ENCODE measurements at regions of chr2 and their contacts with region 1.

Region 1: DNA sequence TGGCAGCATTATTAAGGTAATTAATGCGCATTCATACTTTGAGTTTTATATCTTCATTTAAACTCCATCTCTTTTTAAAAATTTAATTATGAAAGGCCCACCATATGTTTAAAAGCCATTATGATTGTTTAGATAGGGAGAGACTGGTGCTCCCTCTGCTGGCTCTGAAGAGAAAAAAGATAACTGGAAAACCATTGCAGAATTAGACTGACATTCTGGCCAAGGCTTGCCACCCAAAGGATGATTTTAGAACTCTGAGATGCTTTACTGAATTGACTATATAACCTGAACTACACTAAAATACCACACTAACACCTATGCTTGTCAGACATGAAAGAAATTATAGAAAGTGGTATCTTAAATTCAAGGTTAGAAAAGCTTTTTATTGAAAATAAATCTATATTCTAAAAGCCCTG is 127.6 kb upstream of the SPOPL start:
- DNase-seq: no peak
- ATAC-seq: no peak
- H3K4me3 ChIP-seq: no peak overlapping the region
- H3K27ac ChIP-seq: no peak overlapping the region
- H3K4me1 ChIP-seq: peaks cover 0 to 4% (median 0%) of the 10 kb centered on the region in 9 donors
- H3K27me3 ChIP-seq: no peaks in the 10 kb centered on the region
- CTCF ChIP-seq: peak; percentile 23 to 76 (median 68)

Region 2: DNA sequence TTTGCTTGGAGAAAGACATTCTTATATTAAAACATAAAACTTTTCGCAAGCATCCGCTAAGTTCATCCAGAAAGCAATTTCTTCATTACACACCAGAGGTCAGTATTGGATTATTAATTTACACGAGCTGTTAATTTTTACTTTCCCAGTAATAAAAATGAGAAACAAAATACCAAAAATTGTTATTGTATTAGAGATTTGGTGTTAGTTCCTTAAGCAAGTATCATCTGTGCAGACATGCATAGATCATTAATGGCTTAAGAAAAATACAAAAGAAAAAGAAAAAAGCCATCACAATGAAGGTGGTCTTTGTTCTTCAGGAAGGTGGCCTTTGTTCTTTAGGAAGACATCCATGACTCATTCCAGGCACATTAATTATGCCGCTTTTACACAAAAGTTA is 463.4 kb before region 1 on chr2:
- intact Hi-C with region 1: loop called in 2 of 10 experiments (anchors 5 to 10 kb)
- DNase-seq: no peak
- ATAC-seq: no peak
- H3K4me3 ChIP-seq: no peak overlapping the region
- H3K27ac ChIP-seq: no peak overlapping the region
- H3K4me1 ChIP-seq: no peaks in the 10 kb centered on the region
- H3K27me3 ChIP-seq: peaks cover 0 to 4% (median 0%) of the 10 kb centered on the region in 7 donors
- CTCF ChIP-seq: peak; percentile 44 to 80 (median 67)

Region 3: GRCh38 chr2:137947728-137948336 is 426.2 kb before region 1 on chr2:
- intact Hi-C with region 1: loop called in 8 of 10 experiments (anchors 2 to 10 kb)
- DNase-seq: peak; percentile 66 to 69
- ATAC-seq: peak in 6 of 8 donors; percentile 50 to 79 (median 64)
- H3K4me3 ChIP-seq: no peak overlapping the region
- H3K27ac ChIP-seq: no peak overlapping the region
- H3K4me1 ChIP-seq: peaks cover 0 to 3% (median 0%) of the 10 kb centered on the region in 9 donors
- H3K27me3 ChIP-seq: no peaks in the 10 kb centered on the region
- CTCF ChIP-seq: peak; percentile 38 to 80 (median 68)

Region 4: GRCh38 chr2:138298900-138299299 is 75.1 kb before region 1 on chr2:
- intact Hi-C with region 1: no loop called
- DNase-seq: no peak
- ATAC-seq: no peak
- H3K4me3 ChIP-seq: no peak overlapping the region
- H3K27ac ChIP-seq: no peak overlapping the region
- H3K4me1 ChIP-seq: no peaks in the 10 kb centered on the region
- H3K27me3 ChIP-seq: no peaks in the 10 kb centered on the region
- CTCF ChIP-seq: no peak

Measured in heart right ventricle (tissue), 16 donors.